Activated naive CD4-positive, alpha-beta T cell treated with anti-CD3 and anti-CD28 coated beads for 36 hours (primary cell): ENCODE measurements at regions of chr6 and their contacts with region 1.

Region 1: GRCh38 chr6:127737009-127737486 is 160.1 kb downstream of the C6orf58 start:
- DNase-seq: peak; percentile 56
- H3K4me3 Mint-ChIP-seq: no peak overlapping the region
- H3K27ac Mint-ChIP-seq: peak overlapping the region; percentile 63
- H3K4me1 Mint-ChIP-seq: peaks cover 52% of the 10 kb centered on the region
- H3K27me3 Mint-ChIP-seq: no peaks in the 10 kb centered on the region

Region 2: DNA sequence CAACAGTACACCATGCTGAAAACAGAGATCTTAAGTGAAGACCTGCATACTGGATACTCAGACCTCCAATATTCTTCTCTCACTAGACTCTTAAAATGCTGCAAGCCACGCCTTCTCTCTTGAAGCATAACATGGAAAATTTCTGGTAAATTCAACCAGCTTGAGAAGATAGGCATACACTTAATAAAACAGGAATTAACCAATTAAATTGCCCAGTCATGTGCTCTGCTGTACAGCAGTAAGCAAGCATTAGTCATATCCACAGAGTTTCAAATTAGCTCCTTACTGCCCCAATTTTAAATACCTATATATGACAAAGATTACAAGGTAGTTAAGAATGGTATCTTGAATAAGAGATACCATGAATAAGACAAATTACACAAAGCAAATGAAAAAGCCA is 106.2 kb before region 1 on chr6:
- CTCF ChIA-PET with region 1: no interaction called
- intact Hi-C with region 1: no loop called
- DNase-seq: no peak
- H3K4me3 Mint-ChIP-seq: no peak overlapping the region
- H3K27ac Mint-ChIP-seq: no peak overlapping the region
- H3K4me1 Mint-ChIP-seq: no peaks in the 10 kb centered on the region
- H3K27me3 Mint-ChIP-seq: no peaks in the 10 kb centered on the region

Region 3: GRCh38 chr6:128240024-128240428 is 503.0 kb after region 1 on chr6:
- CTCF ChIA-PET with region 1: interaction called, 3 read pairs
- intact Hi-C with region 1: loop called (anchors 5 kb)
- DNase-seq: no peak
- H3K4me3 Mint-ChIP-seq: no peak overlapping the region
- H3K27ac Mint-ChIP-seq: peak overlapping the region; percentile 34
- H3K4me1 Mint-ChIP-seq: peaks cover 15% of the 10 kb centered on the region
- H3K27me3 Mint-ChIP-seq: no peaks in the 10 kb centered on the region

Region 4: DNA sequence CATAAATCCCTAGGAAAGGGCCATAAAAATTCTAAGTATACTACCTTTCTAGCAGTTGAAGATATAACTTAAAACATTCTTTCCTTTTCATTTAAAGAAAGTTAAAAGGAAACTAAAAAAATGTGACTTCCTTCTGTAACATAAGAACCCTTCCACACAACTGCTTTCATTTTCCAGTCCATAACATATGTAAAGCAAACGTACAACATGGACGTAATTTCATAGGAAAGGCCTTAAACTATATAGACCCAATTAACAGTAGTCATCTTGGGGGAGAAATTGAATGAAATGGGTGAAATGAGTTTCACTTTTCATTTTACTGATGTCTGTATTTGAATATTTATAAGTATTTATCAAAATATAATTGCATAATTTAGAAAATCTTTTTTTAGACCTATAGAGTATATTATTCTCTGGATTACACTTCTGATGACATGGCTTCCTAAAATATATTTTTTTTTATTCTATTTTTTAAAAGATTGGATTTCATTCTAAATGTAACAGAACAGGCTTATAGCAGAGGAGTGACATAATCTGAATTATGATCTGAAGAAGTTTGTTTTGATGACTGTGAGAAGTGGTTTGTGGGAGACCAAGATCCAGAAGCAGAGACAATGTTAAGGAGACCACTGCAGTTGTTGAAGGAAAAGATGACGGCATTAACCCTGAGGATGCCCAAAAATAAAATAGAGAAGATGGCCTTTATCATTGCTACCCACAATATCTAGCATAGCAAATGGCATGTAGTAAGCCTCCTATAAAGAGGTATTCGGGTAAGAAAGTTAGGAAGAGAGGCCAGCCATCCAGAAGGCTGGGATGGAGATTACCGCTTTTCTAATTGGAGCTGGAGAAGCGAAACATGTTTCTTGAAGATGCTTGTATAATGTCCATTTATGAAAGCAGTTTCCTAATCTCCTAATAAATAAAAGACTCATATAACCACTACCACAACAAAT is 523.0 kb after region 1 on chr6:
- CTCF ChIA-PET with region 1: no interaction called
- intact Hi-C with region 1: loop called (anchors 1 kb)
- DNase-seq: no peak
- H3K4me3 Mint-ChIP-seq: peak overlapping the region; percentile 60
- H3K27ac Mint-ChIP-seq: peak overlapping the region; percentile 46
- H3K4me1 Mint-ChIP-seq: peaks cover 22% of the 10 kb centered on the region
- H3K27me3 Mint-ChIP-seq: no peaks in the 10 kb centered on the region

Region 5: GRCh38 chr6:128520436-128521281 is 783.6 kb after region 1 on chr6 and contains the start of gene PTPRK:
- CTCF ChIA-PET with region 1: interaction called, 4 read pairs
- intact Hi-C with region 1: loop called (anchors 1 kb)
- DNase-seq: peak; percentile 92
- H3K4me3 Mint-ChIP-seq: peak within 1 kb of the TSS; percentile 91
- H3K27ac Mint-ChIP-seq: peak within 1 kb of the TSS; percentile 63
- H3K4me1 Mint-ChIP-seq: peaks cover 8% of the 10 kb centered on the region
- H3K27me3 Mint-ChIP-seq: peaks cover 34% of the 10 kb centered on the region
- total RNA-seq, gene PTPRK: 5.5 to 8.0 TPM

Region 6: DNA sequence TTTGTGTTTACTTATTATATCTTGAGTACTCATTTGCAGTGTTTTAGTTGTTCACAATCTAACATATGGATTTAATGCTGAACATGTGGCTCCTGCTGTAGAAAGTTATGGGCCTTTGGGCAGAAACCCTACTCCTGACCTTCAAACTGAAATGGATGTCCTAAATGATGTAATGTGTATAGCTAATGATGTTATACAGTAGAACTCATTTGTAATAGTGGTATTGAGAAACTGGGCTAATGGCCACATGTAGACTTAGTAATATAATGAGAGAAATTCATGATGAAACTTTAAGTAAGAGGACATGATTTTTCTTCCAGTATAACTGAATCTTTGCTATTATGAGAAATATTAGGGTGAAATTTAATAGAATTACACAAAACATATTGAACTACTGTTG is 904.7 kb after region 1 on chr6:
- CTCF ChIA-PET with region 1: no interaction called
- intact Hi-C with region 1: no loop called
- DNase-seq: no peak
- H3K4me3 Mint-ChIP-seq: no peak overlapping the region
- H3K27ac Mint-ChIP-seq: no peak overlapping the region
- H3K4me1 Mint-ChIP-seq: no peaks in the 10 kb centered on the region
- H3K27me3 Mint-ChIP-seq: peaks cover 7% of the 10 kb centered on the region

Region 7: GRCh38 chr6:129370268-129370916 is 1633.3 kb after region 1 on chr6:
- CTCF ChIA-PET with region 1: no interaction called
- intact Hi-C with region 1: loop called (anchors 2 kb)
- DNase-seq: peak; percentile 77
- H3K4me3 Mint-ChIP-seq: no peak overlapping the region
- H3K27ac Mint-ChIP-seq: no peak overlapping the region
- H3K4me1 Mint-ChIP-seq: peaks cover 20% of the 10 kb centered on the region
- H3K27me3 Mint-ChIP-seq: no peaks in the 10 kb centered on the region